ENCODE measurements at regions of chr1 and their contacts with region 1.

Region 1: GRCh38 chr1:78081980-78082860 is 36.5 kb downstream of the GIPC2 start:
- H3K4me3 Mint-ChIP-seq: no peak overlapping the region
- H3K27ac Mint-ChIP-seq: no peak overlapping the region
- H3K4me1 Mint-ChIP-seq: no peaks in the 10 kb centered on the region
- H3K27me3 Mint-ChIP-seq: no peaks in the 10 kb centered on the region

Region 2: DNA sequence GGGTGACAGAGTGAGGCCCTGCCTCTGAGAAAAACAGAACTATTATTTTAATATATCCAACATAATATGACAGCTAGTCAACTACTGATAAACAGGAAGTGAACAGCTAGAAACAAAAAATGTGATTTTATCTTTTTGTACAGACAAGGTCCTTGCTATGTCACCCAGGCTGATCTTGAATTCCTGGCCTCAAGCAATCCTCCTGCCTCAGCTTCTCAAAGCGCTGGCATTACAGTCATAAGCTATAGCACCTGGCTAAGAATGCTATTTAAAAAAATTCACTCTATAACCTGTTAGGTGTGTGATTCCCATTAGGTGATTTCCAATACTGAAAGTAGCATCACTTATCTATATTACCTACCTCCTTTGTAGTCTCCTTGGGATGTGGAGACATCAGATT is 53.2 kb before region 1 on chr1:
- intact Hi-C with region 1: loop called (anchors 10 kb)
- H3K4me3 Mint-ChIP-seq: no peak overlapping the region
- H3K27ac Mint-ChIP-seq: no peak overlapping the region
- H3K4me1 Mint-ChIP-seq: no peaks in the 10 kb centered on the region
- H3K27me3 Mint-ChIP-seq: no peaks in the 10 kb centered on the region

Region 3: DNA sequence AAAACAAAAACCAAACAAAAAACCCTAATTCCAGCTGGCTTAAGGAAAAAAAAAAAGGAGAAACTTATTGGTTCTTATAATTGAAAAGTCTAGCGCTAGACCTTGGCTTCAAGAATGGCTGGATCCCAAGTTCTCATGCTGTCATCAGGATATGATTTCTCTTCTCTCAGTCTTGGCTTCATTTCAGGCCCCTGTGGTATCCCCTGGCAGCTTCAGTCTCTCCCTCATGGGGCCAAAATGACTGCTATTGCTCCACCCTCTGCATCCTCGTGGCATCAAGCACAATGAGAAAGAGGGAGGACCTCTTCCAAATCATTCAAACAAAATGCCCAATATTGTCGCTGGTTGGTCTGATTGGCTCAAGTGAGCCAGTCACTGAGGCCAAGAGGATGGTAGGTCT is 44.3 kb after region 1 on chr1:
- intact Hi-C with region 1: no loop called
- H3K4me3 Mint-ChIP-seq: no peak overlapping the region
- H3K27ac Mint-ChIP-seq: no peak overlapping the region
- H3K4me1 Mint-ChIP-seq: no peaks in the 10 kb centered on the region
- H3K27me3 Mint-ChIP-seq: no peaks in the 10 kb centered on the region

Region 4: DNA sequence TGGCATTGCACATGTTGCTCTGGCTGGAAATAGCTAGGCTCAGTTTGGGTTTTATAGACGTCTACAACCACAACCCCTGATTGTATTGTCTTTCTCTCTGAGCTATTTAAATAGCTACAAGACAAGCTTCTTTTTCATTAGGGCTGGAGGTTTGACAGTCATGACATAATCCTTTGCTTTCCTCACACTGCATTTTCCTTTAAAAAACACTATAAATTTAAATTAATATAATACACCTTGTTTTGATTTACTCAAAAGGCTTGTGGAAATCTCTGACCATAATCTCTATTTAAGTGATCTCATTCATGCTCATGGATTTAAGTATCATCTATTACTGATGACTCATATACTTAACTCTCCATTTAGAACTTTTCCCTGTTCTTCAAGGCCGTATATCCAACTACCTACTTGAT is 358.2 kb after region 1 on chr1:
- intact Hi-C with region 1: no loop called
- H3K4me3 Mint-ChIP-seq: no peak overlapping the region
- H3K27ac Mint-ChIP-seq: no peak overlapping the region
- H3K4me1 Mint-ChIP-seq: no peaks in the 10 kb centered on the region
- H3K27me3 Mint-ChIP-seq: no peaks in the 10 kb centered on the region